ENCODE measurements at regions of chr6 and their contacts with region 1.

Region 1: GRCh38 chr6:87701676-87702588 is at the start of gene AKIRIN2:
- DNase-seq: peak; percentile 98
- H3K4me3 Mint-ChIP-seq: peak within 1 kb of the TSS; percentile 86
- H3K27ac Mint-ChIP-seq: peak within 1 kb of the TSS; percentile 91
- H3K4me1 Mint-ChIP-seq: peaks cover 43% of the 10 kb centered on the region
- H3K27me3 Mint-ChIP-seq: no peaks in the 10 kb centered on the region
- total RNA-seq, gene AKIRIN2: 45.7 to 46.0 TPM

Region 2: DNA sequence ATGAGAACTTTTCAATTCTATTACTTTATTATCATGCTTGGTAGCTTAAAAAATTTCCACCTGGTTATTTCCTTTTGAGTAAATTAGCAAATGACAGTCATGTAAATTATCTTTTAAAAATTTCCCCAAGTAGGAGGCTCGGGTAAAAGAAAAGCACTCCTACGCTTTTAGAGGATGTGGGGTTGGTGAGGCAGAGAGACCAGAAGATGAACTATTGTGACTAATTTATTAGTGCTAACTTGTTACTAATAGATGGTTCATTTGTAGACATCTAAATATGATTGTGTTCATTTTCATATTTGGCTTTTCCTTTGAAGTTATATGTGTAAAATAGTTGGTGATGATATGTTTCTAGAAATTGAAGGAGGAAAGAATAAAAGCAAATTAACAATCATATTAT is 519.6 kb before region 1 on chr6:
- CTCF ChIA-PET with region 1: no interaction called
- POLR2A ChIA-PET with region 1: no interaction called
- intact Hi-C with region 1: loop called (anchors 5 kb)
- DNase-seq: peak; percentile 46
- H3K4me3 Mint-ChIP-seq: peak overlapping the region; percentile 37
- H3K27ac Mint-ChIP-seq: peak overlapping the region; percentile 84
- H3K4me1 Mint-ChIP-seq: peaks cover 79% of the 10 kb centered on the region
- H3K27me3 Mint-ChIP-seq: no peaks in the 10 kb centered on the region

Region 3: DNA sequence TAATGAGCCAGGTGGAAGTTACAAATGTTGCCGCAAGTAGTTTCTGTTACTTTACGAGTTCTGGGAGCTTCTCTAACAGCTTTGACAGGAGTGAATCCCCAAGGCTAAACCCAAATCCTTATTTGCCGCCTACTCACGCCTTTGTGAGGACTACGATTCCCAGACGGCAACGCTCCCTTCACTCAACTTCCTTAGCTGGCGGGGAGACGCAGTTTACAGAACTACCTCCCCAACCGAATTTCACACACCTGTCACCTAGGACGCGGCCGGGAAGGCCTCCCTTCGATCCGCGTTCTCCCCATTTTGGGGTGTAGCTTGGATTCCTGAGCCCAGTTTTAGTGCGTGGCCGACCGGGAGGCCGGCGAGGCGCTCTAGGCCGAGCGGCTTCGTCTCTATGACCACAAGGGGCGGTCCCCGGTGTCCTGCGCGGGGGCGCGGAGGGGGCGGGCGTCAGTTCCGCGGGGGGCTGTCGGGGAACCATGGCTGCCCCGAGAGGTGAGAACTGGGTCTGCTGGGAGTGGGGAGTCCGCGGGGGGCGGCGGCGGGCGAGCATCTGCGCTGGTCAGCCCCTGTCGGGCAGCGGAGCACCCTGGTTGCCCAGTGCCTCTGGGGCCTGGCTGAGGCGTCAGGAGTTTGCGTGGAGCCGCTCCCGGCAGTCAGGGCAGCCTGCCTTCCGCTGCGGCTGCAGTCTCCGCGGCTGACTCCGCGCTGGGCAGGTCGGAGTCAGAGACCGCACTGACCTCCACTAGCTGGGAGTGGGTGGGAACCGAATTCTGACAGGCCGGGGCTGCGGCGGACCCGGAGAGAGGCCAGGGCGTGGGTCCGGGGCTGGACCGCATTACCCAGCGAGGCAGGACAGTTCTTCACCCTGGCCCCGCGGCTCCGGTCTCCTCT is 229.2 kb before region 1 on chr6 and contains the start of gene SLC35A1:
- CTCF ChIA-PET with region 1: no interaction called
- POLR2A ChIA-PET with region 1: no interaction called
- intact Hi-C with region 1: loop called (anchors 1 kb)
- DNase-seq: peak; percentile 88
- H3K4me3 Mint-ChIP-seq: peak within 1 kb of the TSS; percentile 98
- H3K27ac Mint-ChIP-seq: peak within 1 kb of the TSS; percentile 91
- H3K4me1 Mint-ChIP-seq: peaks cover 19% of the 10 kb centered on the region
- H3K27me3 Mint-ChIP-seq: peaks cover 3% of the 10 kb centered on the region
- total RNA-seq, gene SLC35A1: 7.8 to 9.5 TPM

Region 4: GRCh38 chr6:87682310-87682709 is 19.6 kb before region 1 on chr6:
- CTCF ChIA-PET with region 1: interaction called, 7 read pairs
- POLR2A ChIA-PET with region 1: interaction called, 6 read pairs
- intact Hi-C with region 1: loop called (anchors 2 kb)
- DNase-seq: no peak
- H3K4me3 Mint-ChIP-seq: no peak overlapping the region
- H3K27ac Mint-ChIP-seq: peak overlapping the region; percentile 46
- H3K4me1 Mint-ChIP-seq: peaks cover 67% of the 10 kb centered on the region
- H3K27me3 Mint-ChIP-seq: no peaks in the 10 kb centered on the region

Region 5: GRCh38 chr6:87742106-87742505 is 40.2 kb after region 1 on chr6:
- CTCF ChIA-PET with region 1: no interaction called
- POLR2A ChIA-PET with region 1: interaction called, 10 read pairs
- intact Hi-C with region 1: loop called (anchors 1 kb)
- DNase-seq: peak; percentile 90
- H3K4me3 Mint-ChIP-seq: peak overlapping the region; percentile 16
- H3K27ac Mint-ChIP-seq: peak overlapping the region; percentile 82
- H3K4me1 Mint-ChIP-seq: peaks cover 44% of the 10 kb centered on the region
- H3K27me3 Mint-ChIP-seq: no peaks in the 10 kb centered on the region

Region 6: DNA sequence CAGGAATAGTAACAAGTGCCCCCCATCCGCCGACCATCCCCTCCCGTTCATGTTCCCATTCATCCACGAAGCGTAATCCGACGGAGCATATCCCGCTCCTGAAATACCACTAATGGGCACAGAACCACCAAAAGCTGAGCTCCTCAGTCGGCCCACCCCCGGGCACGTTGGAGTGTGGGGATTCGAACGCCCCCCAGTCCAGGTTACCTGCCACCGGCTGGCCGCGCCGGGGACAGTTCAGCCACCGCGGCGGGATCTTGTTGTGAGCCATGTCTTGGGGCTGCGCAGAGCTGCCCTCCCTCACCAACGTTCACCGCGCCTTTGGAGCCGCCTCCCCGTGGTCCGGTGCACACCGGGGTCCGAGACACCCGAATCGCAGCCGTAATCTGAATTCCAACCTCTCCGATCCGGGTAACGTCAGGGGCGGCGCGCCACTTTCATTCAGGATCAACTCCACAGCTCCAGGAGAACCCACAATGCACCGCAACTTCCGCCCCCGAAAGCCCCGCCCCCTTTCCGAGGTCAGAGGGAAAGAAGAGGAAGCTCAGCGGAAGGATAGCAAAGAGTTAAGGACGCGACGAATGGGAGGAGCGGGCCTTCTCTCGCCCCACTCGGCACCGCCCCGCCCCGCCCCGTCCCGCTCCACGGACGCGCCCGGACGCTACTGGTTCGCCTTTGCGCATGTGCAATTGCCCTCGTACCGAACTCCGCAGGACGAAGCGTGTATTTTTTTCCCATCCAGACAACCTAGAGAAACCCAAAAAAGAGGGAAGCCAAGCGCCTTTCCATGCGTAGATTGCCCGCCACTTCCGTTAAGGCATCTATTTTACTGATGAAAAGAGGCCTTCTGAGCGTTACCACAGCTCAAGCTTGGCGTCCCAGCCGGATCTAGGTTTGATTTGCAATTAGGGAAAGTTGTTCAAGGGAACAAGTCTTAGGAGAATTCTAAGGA is 1261.5 kb after region 1 on chr6 and contains the start of gene RNGTT:
- CTCF ChIA-PET with region 1: no interaction called
- POLR2A ChIA-PET with region 1: no interaction called
- intact Hi-C with region 1: loop called (anchors 1 kb)
- DNase-seq: peak; percentile 99
- H3K4me3 Mint-ChIP-seq: peak within 1 kb of the TSS; percentile 96
- H3K27ac Mint-ChIP-seq: peak within 1 kb of the TSS; percentile 84
- H3K4me1 Mint-ChIP-seq: peaks cover 39% of the 10 kb centered on the region
- H3K27me3 Mint-ChIP-seq: no peaks in the 10 kb centered on the region
- total RNA-seq, gene RNGTT: 21.3 to 22.0 TPM

Measured in activated CD4-positive, alpha-beta memory T cell treated with anti-CD3 and anti-CD28 coated beads for 36 hours (primary cell).